ENCODE measurements at regions of chr18 and their contacts with region 1.

Region 1: DNA sequence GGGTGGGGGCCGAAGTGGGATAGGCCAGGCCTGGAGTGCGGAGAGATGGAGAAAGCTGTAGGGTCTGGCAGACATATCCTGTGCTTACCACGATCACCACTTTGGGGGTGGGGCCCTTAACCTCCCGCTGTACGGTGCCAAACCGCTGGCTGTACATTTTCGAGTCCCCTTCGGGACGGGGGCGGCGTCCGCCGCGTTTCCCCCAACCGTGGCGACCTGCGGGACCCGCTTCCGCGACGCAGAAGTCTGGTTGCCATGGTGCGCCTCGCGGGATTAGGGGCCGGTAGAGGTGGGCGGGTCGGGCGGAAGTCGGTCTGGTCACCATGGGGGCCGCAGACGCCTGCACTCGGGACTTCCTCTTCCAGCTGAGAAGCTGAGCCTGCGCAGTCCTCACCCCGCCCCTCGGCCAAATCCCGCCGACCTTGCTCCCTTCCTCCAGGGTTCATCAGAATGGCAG is at the start of gene CFAP53:
- DNase-seq: peak; percentile 57
- ATAC-seq: peak; percentile 90
- H3K4me3 ChIP-seq: peak within 1 kb of the TSS; percentile 63
- H3K27ac ChIP-seq: peak within 1 kb of the TSS; percentile 83
- H3K4me1 ChIP-seq: peaks cover 22% of the 10 kb centered on the region
- H3K27me3 ChIP-seq: no peaks in the 10 kb centered on the region; a peak in 1 of 4 replicates
- CTCF ChIP-seq: no peak
- EP300 ChIP-seq: no peak
- POLR2A ChIP-seq: peak; percentile 64
- RAD21 ChIP-seq: no peak
- polyA plus RNA-seq, gene CFAP53: 0.05 to 0.06 TPM

Region 2: DNA sequence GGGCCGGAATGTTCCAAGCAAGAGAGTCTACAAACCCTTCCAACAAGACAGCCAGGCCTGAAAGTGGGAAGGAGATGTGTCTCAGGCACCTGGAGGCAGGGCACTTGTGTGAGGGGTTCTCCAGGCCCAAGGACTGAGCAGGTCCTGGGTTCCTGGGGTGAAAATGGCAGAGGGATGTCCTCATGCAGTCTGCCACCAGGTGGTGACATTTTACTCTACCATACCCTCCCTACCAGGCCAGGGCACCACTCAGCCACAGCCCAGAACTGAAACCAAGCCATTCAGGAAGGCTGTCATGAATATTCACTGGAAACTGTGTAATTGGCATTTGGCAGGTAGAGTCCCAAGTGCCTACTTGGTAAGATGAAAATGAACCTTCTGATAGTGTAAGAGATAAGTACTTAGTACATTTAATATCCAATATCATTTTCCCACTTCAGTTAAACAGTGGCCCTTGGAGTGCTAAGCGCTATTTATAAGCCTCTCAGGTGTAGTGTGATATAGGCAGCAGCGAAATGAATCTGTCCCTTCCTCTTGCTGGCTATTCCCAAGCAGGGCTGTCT is 256.4 kb before region 1 on chr18:
- CTCF ChIA-PET with region 1: interaction called, 7 read pairs
- POLR2A ChIA-PET with region 1: no interaction called
- RAD21 ChIA-PET with region 1: no interaction called
- SMC1A ChIA-PET with region 1: no interaction called
- in situ Hi-C with region 1: no loop called
- intact Hi-C with region 1: loop called (anchors 5 kb)
- DNase-seq: peak; percentile 25
- ATAC-seq: peak; percentile 99
- H3K4me3 ChIP-seq: no peak overlapping the region
- H3K27ac ChIP-seq: no peak overlapping the region
- H3K4me1 ChIP-seq: no peaks in the 10 kb centered on the region
- H3K27me3 ChIP-seq: no peaks in the 10 kb centered on the region
- CTCF ChIP-seq: peak; percentile 69 to 73 (median 72); a peak in 5 of 6 replicates
- EP300 ChIP-seq: no peak
- POLR2A ChIP-seq: no peak
- RAD21 ChIP-seq: peak; percentile 63

Region 3: DNA sequence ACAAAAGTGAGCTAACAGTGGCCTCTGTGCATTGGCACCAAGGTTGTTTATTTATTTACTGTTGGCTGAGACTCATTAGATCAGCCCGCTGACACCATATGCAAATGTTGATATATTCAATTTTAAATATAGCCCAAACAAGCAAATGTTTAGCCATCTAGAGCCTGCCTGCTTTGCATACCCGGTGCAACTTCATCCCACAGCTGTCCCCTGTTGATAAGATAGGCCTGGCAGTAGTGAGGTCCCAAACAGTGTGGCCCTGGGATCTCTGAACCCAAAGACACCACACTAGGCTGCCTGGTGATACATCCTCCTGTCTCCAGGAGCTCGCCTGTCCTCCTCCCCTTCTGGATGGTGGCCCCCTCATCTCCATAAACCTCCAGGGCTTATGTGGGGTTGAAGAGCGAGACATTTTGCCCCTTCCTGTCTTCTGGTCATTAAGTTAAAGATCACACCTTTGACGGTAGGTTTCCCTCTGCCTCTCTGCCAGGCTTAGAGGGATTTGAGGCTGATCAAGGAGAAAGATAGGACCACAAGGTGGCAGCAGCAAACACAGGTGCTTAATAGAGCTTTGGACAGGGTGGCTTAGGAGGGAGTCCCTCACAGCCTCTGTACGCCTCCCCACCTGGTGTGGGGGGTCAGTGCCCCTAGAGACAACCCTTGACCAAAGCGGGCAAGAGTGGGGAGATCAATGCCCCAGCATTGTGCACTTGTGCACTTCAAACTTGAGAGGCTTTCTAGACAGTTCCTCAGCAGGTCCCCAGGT is 47.7 kb before region 1 on chr18:
- CTCF ChIA-PET with region 1: interaction called, 46 read pairs
- POLR2A ChIA-PET with region 1: no interaction called
- RAD21 ChIA-PET with region 1: interaction called, 5 read pairs
- SMC1A ChIA-PET with region 1: interaction called, 20 read pairs
- in situ Hi-C with region 1: no loop called
- intact Hi-C with region 1: loop called (anchors 2 kb)
- DNase-seq: peak; percentile 21
- ATAC-seq: peak; percentile 98
- H3K4me3 ChIP-seq: no peak overlapping the region
- H3K27ac ChIP-seq: no peak overlapping the region
- H3K4me1 ChIP-seq: peaks cover 5% of the 10 kb centered on the region
- H3K27me3 ChIP-seq: no peaks in the 10 kb centered on the region; a peak in 1 of 4 replicates
- CTCF ChIP-seq: peak; percentile 47 to 63 (median 50); a peak in 4 of 6 replicates
- EP300 ChIP-seq: no peak
- POLR2A ChIP-seq: no peak
- RAD21 ChIP-seq: peak; percentile 69

Region 4: DNA sequence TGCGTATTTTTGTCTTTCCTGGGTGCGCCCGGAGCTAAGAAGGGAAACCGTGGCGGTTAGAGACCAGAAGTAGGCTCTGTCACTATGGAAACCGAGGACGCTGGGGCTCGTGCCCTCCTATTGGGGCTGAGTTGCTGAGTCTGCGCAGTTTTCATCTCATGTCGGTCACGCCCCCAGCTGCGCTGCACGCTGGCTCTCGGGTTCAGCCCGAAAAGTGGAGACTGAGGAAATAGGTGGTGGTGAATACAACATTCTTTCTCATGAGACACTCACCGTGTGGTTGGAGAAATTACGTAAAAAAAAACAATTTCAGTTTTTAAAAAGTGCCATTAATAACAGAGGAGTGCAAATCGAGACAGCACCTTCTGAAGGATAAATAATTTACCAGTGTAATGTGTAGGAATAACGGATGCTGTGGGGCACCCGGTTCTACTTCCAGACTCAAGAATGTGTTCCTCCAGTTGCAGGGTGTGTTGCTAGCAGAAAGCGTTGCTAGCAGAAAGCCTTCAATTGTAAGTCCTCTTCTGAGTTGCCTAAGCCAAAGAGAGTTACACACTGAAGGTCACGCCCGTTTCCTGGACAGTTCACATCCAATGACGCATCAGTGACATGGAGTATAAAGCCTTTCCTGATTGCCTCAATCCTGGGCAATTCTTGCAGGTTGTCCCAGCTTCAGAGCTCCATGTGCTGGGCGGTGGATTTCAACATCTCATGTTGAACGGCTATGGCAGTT is 41.6 kb after region 1 on chr18:
- CTCF ChIA-PET with region 1: interaction called, 4 read pairs
- POLR2A ChIA-PET with region 1: no interaction called
- RAD21 ChIA-PET with region 1: interaction called, 3 read pairs
- SMC1A ChIA-PET with region 1: interaction called, 15 read pairs
- in situ Hi-C with region 1: no loop called
- intact Hi-C with region 1: no loop called
- DNase-seq: peak; percentile 73
- ATAC-seq: peak; percentile 88
- H3K4me3 ChIP-seq: peak overlapping the region; percentile 52; the same call in 1 of the 2 replicates
- H3K27ac ChIP-seq: peak overlapping the region; percentile 66
- H3K4me1 ChIP-seq: peaks cover 34% of the 10 kb centered on the region
- H3K27me3 ChIP-seq: no peaks in the 10 kb centered on the region
- CTCF ChIP-seq: no peak
- EP300 ChIP-seq: no peak
- POLR2A ChIP-seq: no peak; the same call in none of the 2 replicates
- RAD21 ChIP-seq: no peak